ENCODE measurements at regions of chr15 and their contacts with region 1.

Region 1: DNA sequence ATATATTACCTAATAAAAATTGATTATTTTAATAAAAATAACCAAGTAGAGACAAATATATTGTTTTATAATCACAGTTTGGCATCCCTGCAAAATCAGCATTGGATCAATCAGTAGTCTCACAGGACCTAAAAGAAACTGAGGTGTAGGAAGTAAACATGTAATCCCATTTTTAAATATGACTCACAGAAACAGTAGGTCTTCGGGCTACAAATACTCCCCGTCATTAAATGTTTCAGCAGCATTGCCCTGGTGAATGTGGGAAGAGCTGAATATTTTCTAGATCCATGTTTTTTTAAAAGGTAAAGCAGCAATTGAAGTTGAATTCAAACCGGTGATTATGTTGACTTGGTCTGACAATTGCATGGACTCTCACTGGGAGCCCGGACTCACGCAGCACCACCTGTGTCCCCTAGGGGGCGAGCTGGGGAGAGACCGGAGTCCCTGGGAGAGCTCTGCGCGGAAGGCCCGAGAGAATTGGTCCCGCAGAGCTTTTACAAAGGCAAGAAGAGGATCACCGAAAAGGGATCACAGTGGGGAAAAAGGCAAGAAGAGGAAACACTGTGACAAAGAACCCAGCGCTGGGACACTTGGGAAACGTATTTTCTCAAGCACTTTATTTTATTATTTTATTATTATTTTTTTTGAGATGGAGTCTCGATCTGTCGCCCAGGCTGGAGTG is 17.2 kb upstream of the USP3 start:
- DNase-seq: no peak
- H3K4me3 ChIP-seq: no peak overlapping the region
- CTCF ChIP-seq: peak; percentile 94

Region 2: DNA sequence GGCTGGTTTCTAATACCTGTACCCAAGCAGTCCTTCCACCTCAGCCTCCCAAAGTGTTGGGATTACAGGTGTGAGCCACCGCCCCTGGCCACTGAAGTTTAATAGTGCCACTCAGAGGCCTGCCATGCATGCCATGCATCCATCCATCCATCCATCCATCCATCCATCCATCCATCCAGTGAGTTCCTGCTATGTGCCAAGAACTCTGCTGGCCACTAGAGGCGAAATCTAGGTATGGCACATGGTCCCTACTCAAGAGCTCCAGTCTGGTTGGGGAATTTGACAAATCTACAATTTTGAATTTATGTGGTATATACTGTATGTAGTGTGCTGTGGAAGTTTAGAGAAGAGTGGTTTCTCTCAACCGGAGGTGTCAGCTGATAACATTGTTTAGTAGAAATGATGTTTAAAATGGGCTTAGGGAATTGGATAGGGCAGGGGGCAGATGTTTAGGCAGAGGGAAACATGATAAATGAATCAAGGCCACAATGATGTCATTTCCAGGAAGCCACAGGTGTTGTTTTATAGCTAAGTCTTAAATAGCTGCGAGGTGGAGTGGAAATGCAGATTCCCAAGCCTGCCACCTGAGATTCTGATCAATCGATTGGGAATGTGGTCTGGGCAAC is 937.8 kb before region 1 on chr15:
- CTCF ChIA-PET with region 1: no interaction called
- POLR2A ChIA-PET with region 1: no interaction called
- DNase-seq: no peak
- H3K4me3 ChIP-seq: no peak overlapping the region
- CTCF ChIP-seq: peak; percentile 43

Region 3: GRCh38 chr15:63332367-63333124 is 154.7 kb before region 1 on chr15:
- CTCF ChIA-PET with region 1: no interaction called
- POLR2A ChIA-PET with region 1: no interaction called
- DNase-seq: peak; percentile 86
- H3K4me3 ChIP-seq: no peak overlapping the region
- CTCF ChIP-seq: no peak

Region 4: GRCh38 chr15:63362196-63362595 is 125.0 kb before region 1 on chr15:
- CTCF ChIA-PET with region 1: no interaction called
- POLR2A ChIA-PET with region 1: no interaction called
- DNase-seq: no peak
- H3K4me3 ChIP-seq: no peak overlapping the region
- CTCF ChIP-seq: no peak

Region 5: DNA sequence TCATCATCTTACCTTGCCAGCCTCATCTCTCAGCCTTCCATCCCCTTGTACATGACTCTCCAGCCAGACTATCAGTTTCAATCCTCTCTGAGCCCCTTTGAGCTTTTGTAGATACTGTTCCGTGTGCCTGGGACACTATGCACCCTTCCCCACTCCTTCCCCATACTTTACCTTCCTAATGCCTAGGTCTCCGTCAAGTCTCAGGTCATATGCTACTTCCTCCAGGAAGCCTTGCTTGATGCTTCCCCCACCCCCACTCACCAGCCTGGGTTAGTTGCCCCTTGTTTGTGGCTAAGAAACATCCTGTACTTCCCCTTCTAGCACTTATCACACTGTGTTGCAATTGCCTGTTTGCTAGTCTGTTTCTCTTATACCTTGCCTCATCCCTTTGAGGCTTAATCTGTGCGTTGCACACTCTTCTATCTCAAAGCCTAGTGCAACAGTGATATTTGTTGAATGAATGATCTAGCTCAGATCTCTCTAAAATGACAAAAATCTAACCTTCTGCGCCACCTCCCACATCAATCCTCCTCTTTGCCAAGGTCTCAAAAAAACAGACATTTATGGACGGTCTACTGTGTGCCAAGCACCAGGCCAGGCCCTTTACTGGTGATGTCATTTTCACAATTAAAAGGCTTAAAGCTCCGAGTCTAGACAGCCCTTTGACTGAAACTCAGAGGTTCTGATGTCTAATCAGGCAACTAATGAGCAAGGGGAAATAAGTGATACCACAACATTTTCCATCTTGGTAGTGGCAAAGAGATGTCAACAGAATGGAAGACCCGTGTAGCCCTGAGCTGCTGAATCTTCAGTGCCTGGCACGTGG is 10.6 kb after region 1 on chr15:
- CTCF ChIA-PET with region 1: interaction called, 59 read pairs
- POLR2A ChIA-PET with region 1: no interaction called
- DNase-seq: no peak
- H3K4me3 ChIP-seq: no peak overlapping the region
- CTCF ChIP-seq: no peak

Region 6: DNA sequence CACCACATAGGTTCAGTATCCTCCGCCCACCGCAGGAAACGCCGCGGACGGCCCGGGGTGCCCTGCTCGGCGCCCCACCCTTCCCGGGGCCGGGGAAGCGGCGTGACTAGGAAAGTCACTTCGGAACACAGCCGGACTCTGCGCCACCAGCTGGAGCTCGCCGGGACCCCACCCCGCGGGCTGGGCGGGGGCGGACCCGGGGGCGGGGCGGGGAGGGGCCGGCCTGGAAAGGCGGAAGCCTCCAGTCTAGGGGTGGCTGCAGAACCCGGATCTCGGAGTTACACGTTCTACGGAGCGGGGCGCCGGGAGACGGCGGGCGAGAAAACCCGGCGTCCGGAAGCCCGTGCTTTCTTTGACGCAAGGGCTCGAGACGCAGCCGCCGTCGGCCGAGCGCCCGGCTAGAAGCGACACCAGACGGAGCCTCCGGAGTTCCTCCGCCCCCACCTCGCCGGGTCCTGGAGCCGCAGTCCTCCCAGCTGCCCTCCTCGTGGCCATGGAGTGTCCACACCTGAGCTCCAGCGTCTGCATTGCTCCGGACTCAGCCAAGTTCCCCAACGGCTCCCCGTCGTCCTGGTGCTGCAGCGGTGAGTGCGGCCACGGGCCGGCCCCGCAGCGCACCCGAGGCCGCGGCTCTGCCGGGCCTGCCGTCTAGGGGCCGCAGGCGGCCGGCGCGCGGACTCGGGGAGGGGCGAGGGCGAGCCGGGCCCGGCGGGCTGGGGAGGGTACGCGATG is 17.2 kb after region 1 on chr15 and contains the start of gene USP3:
- CTCF ChIA-PET with region 1: interaction called, 31 read pairs
- POLR2A ChIA-PET with region 1: no interaction called
- DNase-seq: peak; percentile 73
- H3K4me3 ChIP-seq: peak within 1 kb of the TSS; percentile 93
- CTCF ChIP-seq: peak; percentile 48

Region 7: DNA sequence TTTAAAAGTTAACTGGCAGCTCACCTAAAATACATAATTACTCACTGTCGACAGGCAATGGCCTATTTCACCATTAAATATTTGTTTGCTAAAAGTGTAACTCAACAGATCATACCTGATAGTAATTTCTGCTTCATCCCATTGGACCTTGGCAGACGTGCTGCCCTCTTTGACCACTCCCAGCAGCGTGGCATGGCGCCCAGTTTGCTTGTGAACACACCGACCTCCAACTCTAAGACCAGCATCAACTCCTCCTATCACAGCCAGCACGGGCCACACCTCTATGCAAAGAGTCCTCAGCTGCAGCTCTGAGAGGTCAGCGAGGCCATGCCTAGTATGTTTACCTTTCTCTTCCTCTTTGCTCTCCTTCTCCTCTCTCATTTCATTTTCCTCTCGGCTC is 190.5 kb after region 1 on chr15:
- CTCF ChIA-PET with region 1: no interaction called
- POLR2A ChIA-PET with region 1: no interaction called
- DNase-seq: no peak
- H3K4me3 ChIP-seq: no peak overlapping the region
- CTCF ChIP-seq: no peak

Measured in AG04449 (cell line).